ENCODE measurements at regions of chr13 and their contacts with region 1.

Region 1: DNA sequence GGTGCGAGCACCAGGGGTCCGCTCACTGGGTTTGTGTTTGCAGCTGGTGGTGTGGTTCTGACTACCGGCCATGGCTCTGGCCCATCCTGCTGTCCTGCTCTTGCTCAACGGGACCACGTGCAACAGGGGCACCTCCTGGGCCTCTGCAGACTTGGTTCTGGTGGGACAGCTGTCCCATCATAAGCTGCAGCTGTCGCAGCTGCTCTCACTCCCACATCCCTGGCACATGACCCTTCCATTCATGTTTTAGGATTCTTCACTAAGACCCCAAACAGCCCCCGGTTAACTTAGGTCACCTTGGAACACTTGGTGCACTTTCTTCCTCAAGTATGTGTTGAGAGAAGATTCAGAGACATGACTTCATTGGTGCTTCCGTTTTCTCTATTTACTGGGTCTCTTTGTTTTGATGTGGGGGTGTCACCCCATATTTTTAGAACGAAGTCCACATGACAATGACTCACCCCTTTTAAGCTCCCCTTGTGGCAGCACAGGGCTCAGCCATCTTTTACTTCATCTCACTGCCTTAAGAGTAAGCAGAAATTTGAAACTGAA is 68.4 kb upstream of the ARHGEF7 start:
- DNase-seq: no peak
- H3K4me3 ChIP-seq: no peak overlapping the region
- H3K27ac ChIP-seq: no peak overlapping the region
- H3K4me1 ChIP-seq: peaks cover 2% of the 10 kb centered on the region
- H3K27me3 ChIP-seq: no peaks in the 10 kb centered on the region
- CTCF ChIP-seq: no peak
- EP300 ChIP-seq: no peak
- POLR2A ChIP-seq: no peak

Region 2: GRCh38 chr13:110593430-110594130 is 453.1 kb before region 1 on chr13:
- intact Hi-C with region 1: loop called in 1 of 4 experiments (anchors 10 kb)
- DNase-seq: no peak
- H3K4me3 ChIP-seq: no peak overlapping the region
- H3K27ac ChIP-seq: no peak overlapping the region
- H3K4me1 ChIP-seq: no peaks in the 10 kb centered on the region
- H3K27me3 ChIP-seq: no peaks in the 10 kb centered on the region
- CTCF ChIP-seq: peak; percentile 41 to 74 (median 73)
- EP300 ChIP-seq: no peak
- POLR2A ChIP-seq: no peak

Region 3: DNA sequence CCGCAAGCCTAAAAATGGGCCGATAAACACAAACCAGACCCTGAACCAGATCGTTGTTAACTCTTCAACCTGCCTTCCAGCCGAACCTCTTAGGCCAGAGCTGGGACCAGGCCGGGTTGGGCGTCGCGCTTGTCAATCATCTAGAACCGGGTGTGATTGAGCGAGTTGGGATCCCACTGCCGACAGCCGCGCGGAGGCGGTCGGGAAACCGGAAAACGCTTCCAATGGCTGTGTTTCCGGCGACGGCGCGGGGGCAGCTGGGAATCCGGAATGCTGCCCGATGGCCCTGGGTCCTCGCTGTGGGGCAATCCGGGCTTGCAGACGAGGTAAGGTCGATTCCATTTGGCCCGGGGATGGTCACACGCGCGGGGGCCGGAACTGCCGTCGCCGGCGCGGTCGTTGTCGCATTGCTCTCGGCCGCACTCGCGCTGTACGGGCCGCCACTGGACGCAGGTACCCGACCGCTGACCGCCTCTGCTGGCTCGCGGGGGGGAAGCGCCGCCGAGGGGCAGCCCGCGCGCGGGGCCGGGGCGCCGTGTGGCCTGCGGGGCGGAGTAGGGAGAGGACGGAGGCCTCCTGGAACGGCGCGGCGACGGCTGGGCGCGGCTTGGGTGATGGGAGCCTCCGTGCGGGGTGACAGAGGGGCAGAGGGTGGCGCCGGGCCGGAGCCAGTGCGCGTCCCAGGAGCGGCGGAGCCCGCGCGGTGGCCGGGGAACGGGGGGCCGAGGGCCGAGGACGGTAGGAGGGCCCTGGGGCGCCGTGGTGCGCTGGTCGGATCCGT is 431.2 kb before region 1 on chr13 and contains the start of gene NAXD:
- intact Hi-C with region 1: no loop called
- DNase-seq: peak; percentile 93 to 94 (median 93)
- H3K4me3 ChIP-seq: peak within 1 kb of the TSS; percentile 81
- H3K27ac ChIP-seq: peak within 1 kb of the TSS; percentile 89
- H3K4me1 ChIP-seq: peaks cover 23% of the 10 kb centered on the region
- H3K27me3 ChIP-seq: no peaks in the 10 kb centered on the region
- CTCF ChIP-seq: no peak
- EP300 ChIP-seq: no peak
- POLR2A ChIP-seq: peak; percentile 55
- total RNA-seq, gene NAXD: 38.1 to 67.1 (median 56.9) TPM

Region 4: DNA sequence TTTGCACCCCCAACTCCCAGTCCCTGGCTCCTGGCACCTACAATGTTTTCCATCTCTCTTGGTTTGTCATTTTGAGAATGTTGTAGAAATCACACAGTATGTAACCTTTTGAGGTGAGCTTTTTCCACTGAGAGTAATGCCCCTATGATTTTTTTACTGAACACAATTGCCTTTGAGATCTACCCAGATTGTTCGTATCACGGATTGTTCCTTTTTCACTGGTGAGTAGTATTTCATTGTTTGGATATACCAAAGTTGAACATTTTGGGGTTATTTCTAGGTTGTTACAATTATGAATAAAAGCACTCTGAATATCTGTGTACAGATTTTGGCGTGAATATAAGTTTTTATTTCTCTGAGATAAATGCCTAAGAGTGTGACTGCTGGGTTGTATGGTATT is 114.1 kb before region 1 on chr13:
- intact Hi-C with region 1: loop called in 1 of 4 experiments (anchors 5 kb)
- DNase-seq: no peak
- H3K4me3 ChIP-seq: no peak overlapping the region
- H3K27ac ChIP-seq: no peak overlapping the region
- H3K4me1 ChIP-seq: no peaks in the 10 kb centered on the region
- H3K27me3 ChIP-seq: no peaks in the 10 kb centered on the region
- CTCF ChIP-seq: no peak
- EP300 ChIP-seq: no peak
- POLR2A ChIP-seq: no peak

Region 5: GRCh38 chr13:110944121-110944967 is 102.3 kb before region 1 on chr13:
- intact Hi-C with region 1: loop called in 2 of 4 experiments (anchors 5 to 10 kb)
- DNase-seq: peak in 2 of 5 donors; percentile 28 to 33
- H3K4me3 ChIP-seq: no peak overlapping the region
- H3K27ac ChIP-seq: no peak overlapping the region
- H3K4me1 ChIP-seq: no peaks in the 10 kb centered on the region
- H3K27me3 ChIP-seq: no peaks in the 10 kb centered on the region
- CTCF ChIP-seq: peak in 2 of 3 donors; percentile 38 to 50
- EP300 ChIP-seq: no peak
- POLR2A ChIP-seq: no peak

Measured in ovary (tissue), 10 donors.